AG04450 (cell line): ENCODE measurements at regions of chr15 and their contacts with region 1.

Region 1: GRCh38 chr15:77966540-77967290 is 110.8 kb downstream of the TBC1D2B start:
- DNase-seq: peak; percentile 11
- H3K4me3 ChIP-seq: no peak overlapping the region
- H3K27ac ChIP-seq: no peak overlapping the region
- H3K27me3 ChIP-seq: peaks cover 18% of the 10 kb centered on the region
- CTCF ChIP-seq: peak; percentile 94

Region 2: GRCh38 chr15:78000091-78000926 is 33.6 kb after region 1 on chr15:
- CTCF ChIA-PET with region 1: interaction called, 17 read pairs
- POLR2A ChIA-PET with region 1: interaction called, 3 read pairs
- DNase-seq: no peak
- H3K4me3 ChIP-seq: no peak overlapping the region
- H3K27ac ChIP-seq: no peak overlapping the region
- H3K27me3 ChIP-seq: no peaks in the 10 kb centered on the region
- CTCF ChIP-seq: peak; percentile 30

Region 3: DNA sequence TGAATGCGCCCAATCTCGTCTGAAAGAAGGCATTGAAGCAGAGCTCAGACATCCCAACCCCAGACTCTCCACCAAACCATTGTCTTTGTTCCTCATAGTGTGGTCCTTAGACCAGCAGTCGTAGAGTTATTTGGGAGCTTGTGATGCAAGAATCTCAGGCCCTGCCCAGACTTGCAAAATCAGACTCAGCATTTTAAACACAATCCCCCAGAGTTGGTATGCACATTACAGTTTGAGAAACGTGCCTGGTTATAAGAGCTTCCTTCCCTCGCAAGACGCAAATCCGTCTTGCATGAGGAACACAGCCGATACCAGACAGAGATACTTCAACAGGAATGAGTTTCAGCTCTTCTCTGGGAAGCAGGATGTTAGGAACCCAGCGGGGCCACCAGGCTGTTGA is 432.4 kb after region 1 on chr15:
- CTCF ChIA-PET with region 1: no interaction called
- POLR2A ChIA-PET with region 1: no interaction called
- DNase-seq: no peak
- H3K4me3 ChIP-seq: no peak overlapping the region
- H3K27ac ChIP-seq: no peak overlapping the region
- H3K27me3 ChIP-seq: peaks cover 27% of the 10 kb centered on the region
- CTCF ChIP-seq: no peak